ENCODE measurements at regions of chr13 and their contacts with region 1.

Region 1: GRCh38 chr13:79373916-79374315 is 32.1 kb downstream of the RBM26 start:
- DNase-seq: no peak
- ATAC-seq: no peak
- H3K4me3 ChIP-seq: no peak overlapping the region
- H3K4me3 Mint-ChIP-seq: no peak overlapping the region
- H3K27ac ChIP-seq: no peak overlapping the region
- H3K27ac Mint-ChIP-seq: no peak overlapping the region
- H3K4me1 ChIP-seq: no peaks in the 10 kb centered on the region
- H3K4me1 Mint-ChIP-seq: no peaks in the 10 kb centered on the region
- H3K27me3 ChIP-seq: no peaks in the 10 kb centered on the region
- H3K27me3 Mint-ChIP-seq: no peaks in the 10 kb centered on the region
- CTCF ChIP-seq: no peak

Region 2: DNA sequence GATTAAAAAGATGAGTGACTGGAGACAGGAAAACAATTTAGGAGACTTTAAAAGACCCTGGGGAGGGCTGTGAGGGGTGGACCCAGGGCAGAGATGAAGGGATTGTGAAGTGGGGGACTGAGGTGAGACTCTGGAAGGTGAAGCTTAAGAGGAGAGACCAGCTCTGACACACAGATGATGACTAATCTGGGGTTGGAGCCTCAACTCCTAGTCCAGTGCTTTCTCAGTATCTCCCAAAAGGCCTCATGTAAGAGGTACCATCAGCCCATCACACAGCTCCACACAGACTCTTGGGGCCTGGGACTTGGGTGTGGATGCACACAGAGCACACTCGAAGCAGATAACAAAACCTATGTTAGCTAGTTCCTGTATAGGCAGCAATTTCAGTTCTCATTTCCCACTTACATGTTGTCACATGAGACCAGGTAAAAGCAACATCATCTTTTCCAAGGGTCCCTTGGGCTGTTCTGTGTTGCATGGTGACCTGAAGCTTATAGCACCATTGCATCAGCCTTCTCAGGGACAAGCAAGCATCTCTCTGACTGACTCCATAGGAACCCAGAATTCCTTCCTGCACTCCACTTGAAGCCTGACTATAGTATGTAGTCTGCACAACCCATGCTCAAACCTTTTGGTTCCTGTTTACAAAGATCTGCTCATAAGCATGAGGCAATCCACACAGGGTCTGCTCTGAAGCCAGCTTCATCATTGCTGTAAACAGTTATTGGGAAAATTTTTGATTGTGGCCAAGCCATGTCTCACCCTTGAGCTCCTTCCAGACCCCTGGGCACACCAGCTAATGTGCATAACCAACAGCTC is 1958.5 kb before region 1 on chr13:
- CTCF ChIA-PET with region 1: no interaction called
- POLR2A ChIA-PET with region 1: interaction called, 10 read pairs
- intact Hi-C with region 1: no loop called
- DNase-seq: peak; percentile 65
- ATAC-seq: peak; percentile 87
- H3K4me3 ChIP-seq: no peak overlapping the region
- H3K4me3 Mint-ChIP-seq: peak overlapping the region; percentile 24
- H3K27ac ChIP-seq: peak overlapping the region; percentile 68 to 77
- H3K27ac Mint-ChIP-seq: peak overlapping the region; percentile 93
- H3K4me1 ChIP-seq: peaks cover 26 to 28% of the 10 kb centered on the region in 2 donors
- H3K4me1 Mint-ChIP-seq: peaks cover 33% of the 10 kb centered on the region
- H3K27me3 ChIP-seq: no peaks in the 10 kb centered on the region
- H3K27me3 Mint-ChIP-seq: no peaks in the 10 kb centered on the region
- CTCF ChIP-seq: no peak

Region 3: DNA sequence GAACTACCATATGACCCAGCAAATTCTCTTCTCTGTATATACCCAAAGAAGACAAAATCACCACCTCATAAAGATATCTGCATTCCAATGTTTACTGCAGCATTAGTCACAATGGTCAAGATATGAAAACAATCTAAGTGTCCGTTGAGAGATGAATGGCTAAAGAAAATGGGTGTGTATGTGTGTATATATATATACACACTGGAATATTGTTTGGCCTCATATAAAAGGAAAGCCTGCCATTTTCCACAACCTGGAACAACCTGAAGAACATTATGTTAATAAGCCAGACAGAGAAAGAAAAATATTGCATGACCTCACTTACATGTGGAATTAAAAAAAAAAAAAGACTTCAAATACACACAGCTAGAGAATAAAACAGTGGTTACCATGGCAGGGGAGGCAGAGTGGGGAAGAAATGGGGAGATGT is 61.7 kb after region 1 on chr13:
- CTCF ChIA-PET with region 1: no interaction called
- POLR2A ChIA-PET with region 1: no interaction called
- intact Hi-C with region 1: no loop called
- DNase-seq: no peak
- ATAC-seq: no peak
- H3K4me3 ChIP-seq: no peak overlapping the region
- H3K4me3 Mint-ChIP-seq: no peak overlapping the region
- H3K27ac ChIP-seq: no peak overlapping the region
- H3K27ac Mint-ChIP-seq: no peak overlapping the region
- H3K4me1 ChIP-seq: no peaks in the 10 kb centered on the region
- H3K4me1 Mint-ChIP-seq: no peaks in the 10 kb centered on the region
- H3K27me3 ChIP-seq: no peaks in the 10 kb centered on the region
- H3K27me3 Mint-ChIP-seq: no peaks in the 10 kb centered on the region
- CTCF ChIP-seq: no peak

Region 4: GRCh38 chr13:79491715-79492114 is 117.8 kb after region 1 on chr13:
- CTCF ChIA-PET with region 1: no interaction called
- POLR2A ChIA-PET with region 1: no interaction called
- intact Hi-C with region 1: no loop called
- DNase-seq: no peak
- ATAC-seq: no peak
- H3K4me3 ChIP-seq: no peak overlapping the region
- H3K4me3 Mint-ChIP-seq: no peak overlapping the region
- H3K27ac ChIP-seq: no peak overlapping the region
- H3K27ac Mint-ChIP-seq: no peak overlapping the region
- H3K4me1 ChIP-seq: no peaks in the 10 kb centered on the region
- H3K4me1 Mint-ChIP-seq: no peaks in the 10 kb centered on the region
- H3K27me3 ChIP-seq: peaks cover 0 to 4% (median 0%) of the 10 kb centered on the region in 4 experiments
- H3K27me3 Mint-ChIP-seq: peaks cover 10% of the 10 kb centered on the region
- CTCF ChIP-seq: no peak

Region 5: GRCh38 chr13:79589603-79590393 is 215.9 kb after region 1 on chr13:
- CTCF ChIA-PET with region 1: no interaction called
- POLR2A ChIA-PET with region 1: no interaction called
- intact Hi-C with region 1: no loop called
- DNase-seq: no peak
- ATAC-seq: no peak
- H3K4me3 ChIP-seq: no peak overlapping the region
- H3K4me3 Mint-ChIP-seq: no peak overlapping the region
- H3K27ac ChIP-seq: no peak overlapping the region
- H3K27ac Mint-ChIP-seq: no peak overlapping the region
- H3K4me1 ChIP-seq: no peaks in the 10 kb centered on the region
- H3K4me1 Mint-ChIP-seq: no peaks in the 10 kb centered on the region
- H3K27me3 ChIP-seq: no peaks in the 10 kb centered on the region
- H3K27me3 Mint-ChIP-seq: peaks cover 7% of the 10 kb centered on the region
- CTCF ChIP-seq: no peak

Region 6: GRCh38 chr13:80151016-80151415 is 777.1 kb after region 1 on chr13:
- CTCF ChIA-PET with region 1: no interaction called
- POLR2A ChIA-PET with region 1: no interaction called
- intact Hi-C with region 1: no loop called
- DNase-seq: no peak
- ATAC-seq: no peak
- H3K4me3 ChIP-seq: no peak overlapping the region
- H3K4me3 Mint-ChIP-seq: no peak overlapping the region
- H3K27ac ChIP-seq: no peak overlapping the region
- H3K27ac Mint-ChIP-seq: no peak overlapping the region
- H3K4me1 ChIP-seq: no peaks in the 10 kb centered on the region
- H3K4me1 Mint-ChIP-seq: no peaks in the 10 kb centered on the region
- H3K27me3 ChIP-seq: no peaks in the 10 kb centered on the region
- H3K27me3 Mint-ChIP-seq: no peaks in the 10 kb centered on the region
- CTCF ChIP-seq: no peak

Measured in B cell (primary cell).